CD14-positive monocyte (primary cell): ENCODE measurements at regions of chr18 and their contacts with region 1.

Region 1: DNA sequence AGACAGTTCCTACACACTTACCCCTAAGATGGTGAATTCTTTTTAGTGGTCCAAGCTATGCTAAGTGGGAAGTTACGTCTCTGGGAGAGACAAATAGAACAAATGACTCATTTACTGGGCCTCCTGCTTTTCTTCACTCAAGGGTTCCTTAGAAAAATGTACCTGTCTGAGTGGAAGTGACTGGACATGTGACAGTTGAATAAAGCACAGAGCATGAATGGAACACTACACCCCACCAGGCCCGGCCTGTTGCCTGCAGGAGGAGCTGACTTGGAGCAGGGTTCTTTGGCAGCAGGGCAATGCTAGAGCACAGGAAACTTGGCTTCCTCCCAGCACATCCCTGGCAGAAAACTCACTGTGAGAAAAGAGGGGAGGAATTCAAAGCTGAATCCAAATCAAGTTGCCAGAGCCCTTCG is 451.0 kb upstream of the SETBP1 start:
- DNase-seq: no peak
- H3K4me3 ChIP-seq: no peak overlapping the region
- H3K4me3 Mint-ChIP-seq: no peak overlapping the region
- H3K27ac ChIP-seq: no peak overlapping the region
- H3K27ac Mint-ChIP-seq: no peak overlapping the region
- H3K4me1 ChIP-seq: no peaks in the 10 kb centered on the region
- H3K4me1 Mint-ChIP-seq: no peaks in the 10 kb centered on the region
- H3K27me3 ChIP-seq: no peaks in the 10 kb centered on the region
- H3K27me3 Mint-ChIP-seq: no peaks in the 10 kb centered on the region
- CTCF ChIP-seq: no peak

Region 2: GRCh38 chr18:44156126-44156525 is 73.6 kb before region 1 on chr18:
- intact Hi-C with region 1: no loop called
- DNase-seq: no peak
- H3K4me3 ChIP-seq: no peak overlapping the region
- H3K4me3 Mint-ChIP-seq: no peak overlapping the region
- H3K27ac ChIP-seq: no peak overlapping the region
- H3K27ac Mint-ChIP-seq: no peak overlapping the region
- H3K4me1 ChIP-seq: no peaks in the 10 kb centered on the region
- H3K4me1 Mint-ChIP-seq: no peaks in the 10 kb centered on the region
- H3K27me3 ChIP-seq: no peaks in the 10 kb centered on the region
- H3K27me3 Mint-ChIP-seq: peaks cover 0 to 2% (median 2%) of the 10 kb centered on the region in 3 donors
- CTCF ChIP-seq: no peak

Region 3: GRCh38 chr18:44280479-44280878 is 50.8 kb after region 1 on chr18:
- intact Hi-C with region 1: loop called in 1 of 2 experiments (anchors 10 kb)
- DNase-seq: no peak
- H3K4me3 ChIP-seq: no peak overlapping the region
- H3K4me3 Mint-ChIP-seq: no peak overlapping the region
- H3K27ac ChIP-seq: no peak overlapping the region
- H3K27ac Mint-ChIP-seq: no peak overlapping the region
- H3K4me1 ChIP-seq: no peaks in the 10 kb centered on the region
- H3K4me1 Mint-ChIP-seq: no peaks in the 10 kb centered on the region
- H3K27me3 ChIP-seq: no peaks in the 10 kb centered on the region
- H3K27me3 Mint-ChIP-seq: no peaks in the 10 kb centered on the region
- CTCF ChIP-seq: no peak